Activated B cell treated with CpG ODN at 0.5 μM for 24 hours (primary cell): ENCODE measurements at regions of chr3 and their contacts with region 1.

Region 1: DNA sequence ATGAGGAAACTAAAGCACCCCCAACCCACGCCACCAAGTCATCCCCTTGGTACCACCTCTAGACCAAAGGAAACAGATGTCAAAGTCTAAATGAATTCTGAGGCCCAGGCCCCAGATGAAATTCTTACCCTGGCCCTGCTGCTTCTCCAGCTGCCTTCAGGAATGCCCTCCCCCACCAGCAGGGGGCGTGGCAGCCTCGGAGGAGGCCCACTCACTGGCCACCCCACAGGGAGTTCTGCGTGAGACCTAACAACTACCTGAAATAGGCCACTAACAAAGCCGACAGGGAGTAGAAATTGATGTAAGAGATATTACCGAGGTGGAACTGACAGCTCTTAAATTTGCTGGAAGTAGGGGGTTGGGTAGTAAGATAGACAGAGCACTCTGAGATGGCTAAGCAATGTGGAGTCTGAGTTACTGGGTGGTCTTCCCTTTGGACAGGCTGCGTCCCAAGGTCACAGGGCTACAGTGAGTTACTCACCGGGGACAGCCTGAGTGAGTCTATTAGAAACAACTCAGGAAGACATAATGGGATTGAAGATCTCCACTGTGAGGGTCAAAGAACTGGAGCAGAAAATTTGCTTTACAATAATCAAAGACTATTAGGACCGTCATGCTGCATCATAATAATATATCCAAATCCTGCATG is 240.7 kb downstream of the SHOX2 start:
- DNase-seq: peak; percentile 20
- ATAC-seq: no peak
- H3K4me3 Mint-ChIP-seq: no peak overlapping the region
- H3K27ac Mint-ChIP-seq: no peak overlapping the region
- H3K4me1 Mint-ChIP-seq: no peaks in the 10 kb centered on the region
- H3K27me3 Mint-ChIP-seq: no peaks in the 10 kb centered on the region
- CTCF ChIP-seq: no peak

Region 2: GRCh38 chr3:157572559-157573270 is 292.8 kb before region 1 on chr3:
- CTCF ChIA-PET with region 1: no interaction called
- POLR2A ChIA-PET with region 1: no interaction called
- intact Hi-C with region 1: no loop called
- DNase-seq: no peak
- ATAC-seq: no peak
- H3K4me3 Mint-ChIP-seq: no peak overlapping the region
- H3K27ac Mint-ChIP-seq: no peak overlapping the region
- H3K4me1 Mint-ChIP-seq: no peaks in the 10 kb centered on the region
- H3K27me3 Mint-ChIP-seq: peaks cover 14% of the 10 kb centered on the region
- CTCF ChIP-seq: no peak

Region 3: DNA sequence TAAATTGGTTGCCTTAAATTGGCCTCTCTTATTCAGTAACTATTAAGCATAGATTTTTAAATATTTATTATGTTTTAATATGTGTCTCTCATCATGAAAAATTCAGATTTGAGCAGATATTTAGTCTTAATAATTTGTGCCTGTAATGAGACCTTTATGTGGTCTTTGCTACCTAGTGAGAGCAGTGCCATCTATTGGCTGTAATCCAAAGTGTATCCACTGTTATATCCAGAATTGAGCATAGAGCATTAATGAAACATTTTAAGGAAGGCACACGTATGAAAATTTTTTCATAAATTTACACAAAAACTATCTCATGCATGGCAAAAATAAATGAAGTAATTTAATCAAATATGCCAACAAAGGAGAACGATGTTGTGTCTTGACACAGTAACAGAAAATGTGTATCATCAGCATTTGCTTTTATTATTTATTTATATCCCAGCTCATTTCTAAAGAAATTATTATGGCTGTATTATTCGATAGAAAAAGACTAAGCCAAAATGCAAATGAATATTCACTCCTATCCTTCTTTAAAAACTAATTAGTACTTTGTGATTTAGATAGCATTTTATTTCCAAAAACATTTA is 448.0 kb after region 1 on chr3:
- CTCF ChIA-PET with region 1: interaction called, 3 read pairs
- POLR2A ChIA-PET with region 1: no interaction called
- intact Hi-C with region 1: loop called (anchors 1 kb)
- DNase-seq: no peak
- ATAC-seq: no peak
- H3K4me3 Mint-ChIP-seq: no peak overlapping the region
- H3K27ac Mint-ChIP-seq: no peak overlapping the region
- H3K4me1 Mint-ChIP-seq: no peaks in the 10 kb centered on the region
- H3K27me3 Mint-ChIP-seq: no peaks in the 10 kb centered on the region
- CTCF ChIP-seq: no peak